A673 (cell line): ENCODE measurements at regions of chr7 and their contacts with region 1.

Region 1: DNA sequence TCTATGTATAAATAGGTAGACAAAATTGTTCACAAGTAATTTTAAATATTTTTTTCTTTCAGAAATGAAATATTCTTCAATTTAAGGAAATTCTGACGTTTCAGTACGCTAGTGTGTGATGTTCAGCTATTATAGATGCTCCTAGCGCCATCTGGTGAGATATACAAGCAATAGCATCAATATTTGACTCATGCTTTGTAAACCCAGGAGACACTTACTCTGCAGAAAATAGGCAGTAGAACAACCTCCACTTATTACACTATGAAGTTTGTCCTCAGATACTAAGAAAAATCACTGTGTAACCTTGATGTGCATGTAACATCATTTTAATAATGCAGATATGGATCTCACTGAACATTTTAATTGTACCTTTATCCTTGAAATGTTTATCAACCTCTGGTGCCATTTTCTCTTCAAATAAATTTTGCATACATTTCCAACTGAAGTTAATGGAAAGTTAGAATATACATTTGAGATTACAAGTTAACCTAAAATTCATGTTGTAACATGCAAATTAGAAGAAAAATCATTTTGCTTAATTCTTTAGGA is 151.5 kb upstream of the FAM3C start:
- DNase-seq: peak; percentile 72
- H3K4me3 ChIP-seq: no peak overlapping the region
- H3K27ac ChIP-seq: no peak overlapping the region
- H3K4me1 ChIP-seq: peaks cover 3% of the 10 kb centered on the region
- H3K27me3 ChIP-seq: no peaks in the 10 kb centered on the region
- CTCF ChIP-seq: peak; percentile 85

Region 2: GRCh38 chr7:120996333-120996987 is 551.2 kb before region 1 on chr7:
- CTCF ChIA-PET with region 1: no interaction called
- POLR2A ChIA-PET with region 1: no interaction called
- intact Hi-C with region 1: loop called (anchors 10 kb)
- DNase-seq: peak; percentile 88
- H3K4me3 ChIP-seq: no peak overlapping the region
- H3K27ac ChIP-seq: no peak overlapping the region
- H3K4me1 ChIP-seq: peaks cover 57% of the 10 kb centered on the region
- H3K27me3 ChIP-seq: no peaks in the 10 kb centered on the region
- CTCF ChIP-seq: no peak

Region 3: GRCh38 chr7:121069346-121070100 is 478.1 kb before region 1 on chr7:
- CTCF ChIA-PET with region 1: no interaction called
- POLR2A ChIA-PET with region 1: no interaction called
- intact Hi-C with region 1: no loop called
- DNase-seq: no peak
- H3K4me3 ChIP-seq: no peak overlapping the region
- H3K27ac ChIP-seq: no peak overlapping the region
- H3K4me1 ChIP-seq: no peaks in the 10 kb centered on the region
- H3K27me3 ChIP-seq: no peaks in the 10 kb centered on the region
- CTCF ChIP-seq: no peak

Region 4: GRCh38 chr7:121126801-121127534 is 420.6 kb before region 1 on chr7:
- CTCF ChIA-PET with region 1: no interaction called
- POLR2A ChIA-PET with region 1: no interaction called
- intact Hi-C with region 1: loop called (anchors 5 kb)
- DNase-seq: peak; percentile 28
- H3K4me3 ChIP-seq: no peak overlapping the region
- H3K27ac ChIP-seq: no peak overlapping the region
- H3K4me1 ChIP-seq: peaks cover 10% of the 10 kb centered on the region
- H3K27me3 ChIP-seq: no peaks in the 10 kb centered on the region
- CTCF ChIP-seq: peak; percentile 57; the same call in 1 of the 2 replicates

Region 5: DNA sequence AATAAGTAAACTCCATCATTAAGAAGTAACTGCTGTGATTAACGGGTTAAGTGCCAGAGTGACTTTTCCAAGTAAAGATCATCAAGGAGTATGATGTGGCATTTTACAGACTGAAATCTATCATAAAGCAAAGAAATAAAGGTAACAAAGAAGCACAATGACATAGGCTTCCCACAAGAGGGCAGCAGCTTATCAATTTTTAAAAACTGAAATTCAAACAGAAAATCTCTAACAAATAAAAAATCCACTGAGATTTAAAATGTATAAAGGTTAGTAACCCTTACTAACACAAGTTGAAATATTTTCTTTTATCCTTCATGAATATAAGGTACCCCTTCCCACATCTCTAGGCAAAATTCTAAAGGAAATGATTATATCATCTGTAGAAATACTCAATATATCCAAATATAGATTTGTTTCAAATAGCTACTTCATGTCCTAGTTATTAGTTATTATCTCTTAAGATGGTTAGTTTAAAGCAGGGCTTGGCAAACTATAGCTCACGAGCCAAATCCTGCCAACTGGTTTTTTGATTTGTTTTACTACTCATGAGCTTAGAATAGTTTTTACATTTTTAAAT is 180.7 kb before region 1 on chr7:
- CTCF ChIA-PET with region 1: interaction called, 14 read pairs
- POLR2A ChIA-PET with region 1: no interaction called
- intact Hi-C with region 1: loop called (anchors 1 kb)
- DNase-seq: peak; percentile 49
- H3K4me3 ChIP-seq: no peak overlapping the region
- H3K27ac ChIP-seq: no peak overlapping the region
- H3K4me1 ChIP-seq: peaks cover 25% of the 10 kb centered on the region
- H3K27me3 ChIP-seq: no peaks in the 10 kb centered on the region
- CTCF ChIP-seq: peak; percentile 83

Region 6: GRCh38 chr7:121449329-121449728 is 98.3 kb before region 1 on chr7:
- CTCF ChIA-PET with region 1: no interaction called
- POLR2A ChIA-PET with region 1: no interaction called
- intact Hi-C with region 1: loop called (anchors 5 kb)
- DNase-seq: peak; percentile 70
- H3K4me3 ChIP-seq: no peak overlapping the region
- H3K27ac ChIP-seq: peak overlapping the region; percentile 32
- H3K4me1 ChIP-seq: peaks cover 44% of the 10 kb centered on the region
- H3K27me3 ChIP-seq: no peaks in the 10 kb centered on the region
- CTCF ChIP-seq: peak; percentile 42

Region 7: GRCh38 chr7:121824276-121824675 is 276.7 kb after region 1 on chr7:
- CTCF ChIA-PET with region 1: no interaction called
- POLR2A ChIA-PET with region 1: no interaction called
- intact Hi-C with region 1: no loop called
- DNase-seq: no peak
- H3K4me3 ChIP-seq: no peak overlapping the region
- H3K27ac ChIP-seq: no peak overlapping the region
- H3K4me1 ChIP-seq: no peaks in the 10 kb centered on the region
- H3K27me3 ChIP-seq: no peaks in the 10 kb centered on the region
- CTCF ChIP-seq: no peak